BJ (cell line): ENCODE measurements at regions of chr6 and their contacts with region 1.

Region 1: DNA sequence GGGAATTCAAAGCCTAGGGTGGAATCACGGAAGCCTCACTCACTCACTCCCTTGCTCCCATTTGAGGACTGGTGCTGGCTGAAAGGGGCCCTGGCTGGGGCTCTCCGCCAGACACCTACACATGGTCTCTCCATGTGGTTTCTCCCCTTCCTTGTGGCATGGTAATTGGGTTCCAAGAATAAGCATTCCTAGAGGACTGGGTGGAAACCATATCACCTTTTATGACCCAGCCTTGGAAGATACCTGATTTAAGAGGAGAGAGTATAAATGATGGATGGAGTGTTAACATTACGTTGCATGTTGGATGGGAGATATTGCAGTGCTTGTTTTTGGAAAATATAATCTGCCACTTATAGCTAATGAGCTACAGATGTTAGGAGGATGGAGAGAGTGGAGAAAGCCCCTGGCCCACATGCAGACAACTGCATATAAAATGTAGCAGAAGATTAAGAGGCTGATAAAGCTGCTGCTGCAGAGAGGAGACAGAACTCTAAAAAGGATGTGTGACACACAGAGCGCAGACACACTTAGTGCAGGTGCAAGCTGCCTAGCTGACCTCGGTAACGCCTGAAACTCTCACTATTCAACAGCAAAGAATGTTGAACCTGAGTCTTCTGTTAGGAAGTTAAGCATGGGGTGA is 23.3 kb upstream of the CDKN1A start:
- DNase-seq: no peak
- H3K4me3 ChIP-seq: no peak overlapping the region
- H3K27me3 ChIP-seq: peaks cover 3% of the 10 kb centered on the region; the same call in 1 of the 2 replicates
- CTCF ChIP-seq: no peak

Region 2: GRCh38 chr6:36633915-36634314 is 21.3 kb before region 1 on chr6:
- CTCF ChIA-PET with region 1: interaction called, 3 read pairs
- POLR2A ChIA-PET with region 1: interaction called, 12 read pairs
- DNase-seq: no peak
- H3K4me3 ChIP-seq: no peak overlapping the region
- H3K27me3 ChIP-seq: no peaks in the 10 kb centered on the region
- CTCF ChIP-seq: no peak

Region 3: DNA sequence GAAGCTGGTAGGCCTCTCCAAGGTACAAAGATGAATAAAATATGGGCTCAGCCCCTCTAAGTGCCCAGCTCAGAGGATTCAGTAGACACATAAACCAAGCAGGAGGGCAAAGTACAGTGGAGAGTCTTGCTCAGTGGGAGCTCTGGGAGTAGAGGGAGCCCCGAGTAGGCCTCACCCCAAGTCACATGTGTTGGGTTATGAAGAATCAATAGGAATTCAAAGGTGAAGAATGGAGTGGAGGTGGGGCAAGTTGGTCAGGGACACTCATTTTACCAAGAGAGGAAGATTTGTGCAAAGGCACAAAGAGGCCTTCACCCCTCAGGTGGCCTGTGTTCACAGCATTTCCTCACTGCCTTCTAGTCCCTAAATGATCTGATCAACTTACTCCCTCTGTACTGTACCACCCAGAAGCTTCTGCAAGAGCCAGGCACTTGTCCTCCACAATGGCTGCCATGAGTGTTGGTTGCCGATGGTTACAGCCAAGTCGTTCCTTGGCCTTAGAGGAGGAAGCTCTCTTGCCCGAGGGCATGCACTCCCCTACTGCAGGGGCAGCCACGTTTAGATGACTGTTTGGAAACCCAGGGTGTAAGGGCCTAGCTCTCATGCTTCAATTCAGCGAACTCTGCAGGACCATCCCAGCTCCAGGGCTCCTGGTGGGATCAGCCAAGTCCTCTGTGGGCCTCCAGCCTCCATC is 16.6 kb after region 1 on chr6:
- CTCF ChIA-PET with region 1: no interaction called
- POLR2A ChIA-PET with region 1: no interaction called
- DNase-seq: no peak
- H3K4me3 ChIP-seq: no peak overlapping the region
- H3K27me3 ChIP-seq: no peaks in the 10 kb centered on the region
- CTCF ChIP-seq: no peak

Region 4: DNA sequence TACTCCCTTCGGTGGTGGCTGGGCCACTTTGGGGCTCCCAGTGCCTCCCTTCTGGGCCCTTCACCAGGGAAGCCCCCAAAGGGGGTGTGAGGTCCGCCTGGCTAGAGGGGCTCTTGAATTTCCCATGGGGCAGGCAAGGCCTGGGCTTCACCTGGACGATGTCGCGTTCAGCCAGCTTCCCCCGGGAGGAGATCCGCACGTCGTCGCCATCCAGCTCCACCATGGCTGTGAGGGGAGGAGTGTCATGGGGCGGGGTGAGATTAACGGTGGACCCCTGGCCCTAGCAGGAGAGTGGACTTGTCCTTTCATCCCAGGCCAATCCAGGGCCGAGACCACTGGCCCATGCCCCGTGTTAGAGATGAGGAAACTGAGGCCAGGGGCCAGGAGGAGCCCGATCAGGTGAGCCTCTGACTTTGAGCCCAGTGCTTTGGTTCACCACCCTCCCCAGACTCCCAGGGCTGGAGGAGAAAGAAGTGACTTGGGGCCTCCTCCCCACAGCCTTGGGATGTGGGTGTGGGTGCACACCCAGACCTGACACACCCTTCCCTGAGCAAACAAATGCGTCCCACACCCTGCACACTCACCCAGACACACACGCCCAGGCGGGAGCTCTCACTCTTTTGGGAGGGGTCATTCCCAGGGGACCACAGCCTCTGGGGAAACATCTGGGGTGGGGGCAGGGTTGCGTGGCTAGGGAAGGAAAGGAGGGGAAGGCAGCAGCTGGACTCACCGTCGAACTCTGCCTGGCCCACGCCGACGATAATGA is 88.5 kb after region 1 on chr6:
- CTCF ChIA-PET with region 1: no interaction called
- POLR2A ChIA-PET with region 1: no interaction called
- DNase-seq: no peak
- H3K4me3 ChIP-seq: no peak overlapping the region
- H3K27me3 ChIP-seq: peaks cover 7% of the 10 kb centered on the region
- CTCF ChIP-seq: no peak